Activated CD4-positive, alpha-beta T cell treated with anti-CD3 and anti-CD28 coated beads for 36 hours (primary cell): ENCODE measurements at regions of chr3 and their contacts with region 1.

Region 1: GRCh38 chr3:58217209-58217811 is 6.5 kb upstream of the DNASE1L3 start:
- DNase-seq: peak; percentile 76
- ATAC-seq: peak; percentile 34
- H3K4me3 Mint-ChIP-seq: peak overlapping the region; percentile 9
- H3K27ac Mint-ChIP-seq: no peak overlapping the region
- H3K4me1 Mint-ChIP-seq: peaks cover 36% of the 10 kb centered on the region
- H3K27me3 Mint-ChIP-seq: peaks cover 4% of the 10 kb centered on the region

Region 2: GRCh38 chr3:57903124-57903890 is 314.0 kb before region 1 on chr3:
- CTCF ChIA-PET with region 1: no interaction called
- POLR2A ChIA-PET with region 1: no interaction called
- intact Hi-C with region 1: no loop called
- DNase-seq: no peak
- ATAC-seq: no peak
- H3K4me3 Mint-ChIP-seq: no peak overlapping the region
- H3K27ac Mint-ChIP-seq: no peak overlapping the region
- H3K4me1 Mint-ChIP-seq: no peaks in the 10 kb centered on the region
- H3K27me3 Mint-ChIP-seq: no peaks in the 10 kb centered on the region

Region 3: DNA sequence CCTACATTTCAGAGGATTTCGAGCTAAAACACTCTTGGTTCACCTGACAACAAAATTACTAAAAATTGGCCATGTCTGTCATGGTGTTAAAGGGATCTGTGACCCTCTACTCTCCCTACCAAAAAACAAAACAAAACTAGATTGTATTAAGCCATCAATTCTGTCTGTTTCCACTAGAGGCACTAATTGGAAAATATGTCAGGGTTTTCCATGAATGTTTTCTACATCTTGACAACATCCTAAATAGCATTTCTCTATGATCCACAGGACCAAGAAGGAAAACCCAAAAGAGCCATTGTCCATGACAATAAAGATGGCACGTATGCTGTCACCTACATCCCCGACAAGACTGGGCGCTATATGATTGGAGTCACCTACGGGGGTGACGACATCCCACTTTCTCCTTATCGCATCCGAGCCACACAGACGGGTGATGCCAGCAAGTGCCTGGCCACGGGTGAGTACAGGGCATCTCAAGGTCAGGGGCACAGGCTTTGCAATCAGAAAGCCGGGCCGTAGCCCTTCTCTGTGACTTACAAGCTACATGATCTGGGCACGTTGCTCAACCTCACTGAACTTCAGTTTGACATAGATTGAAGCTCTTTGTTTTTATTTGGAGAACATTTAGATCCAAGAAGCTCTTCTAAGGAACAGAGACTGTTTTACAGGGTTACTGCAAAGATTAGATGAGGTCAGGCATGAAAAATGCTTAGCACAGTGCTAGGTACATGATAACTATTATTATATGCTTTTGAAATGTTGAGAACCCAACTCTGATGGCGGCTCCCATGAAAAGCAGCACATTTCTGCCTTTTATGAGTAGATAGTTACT is 81.4 kb before region 1 on chr3:
- CTCF ChIA-PET with region 1: no interaction called
- POLR2A ChIA-PET with region 1: no interaction called
- intact Hi-C with region 1: no loop called
- DNase-seq: no peak
- ATAC-seq: no peak
- H3K4me3 Mint-ChIP-seq: no peak overlapping the region
- H3K27ac Mint-ChIP-seq: no peak overlapping the region
- H3K4me1 Mint-ChIP-seq: no peaks in the 10 kb centered on the region
- H3K27me3 Mint-ChIP-seq: no peaks in the 10 kb centered on the region

Region 4: GRCh38 chr3:58188173-58188564 is 29.1 kb before region 1 on chr3:
- CTCF ChIA-PET with region 1: interaction called, 224 read pairs
- POLR2A ChIA-PET with region 1: interaction called, 3 read pairs
- intact Hi-C with region 1: loop called (anchors 1 kb)
- DNase-seq: no peak
- ATAC-seq: peak; percentile 63
- H3K4me3 Mint-ChIP-seq: no peak overlapping the region
- H3K27ac Mint-ChIP-seq: no peak overlapping the region
- H3K4me1 Mint-ChIP-seq: no peaks in the 10 kb centered on the region
- H3K27me3 Mint-ChIP-seq: no peaks in the 10 kb centered on the region

Region 5: GRCh38 chr3:58206406-58207011 is 10.8 kb before region 1 on chr3:
- CTCF ChIA-PET with region 1: interaction called, 13 read pairs
- POLR2A ChIA-PET with region 1: no interaction called
- intact Hi-C with region 1: loop called (anchors 1 kb)
- DNase-seq: peak; percentile 73
- ATAC-seq: peak; percentile 98
- H3K4me3 Mint-ChIP-seq: no peak overlapping the region
- H3K27ac Mint-ChIP-seq: peak overlapping the region; percentile 47
- H3K4me1 Mint-ChIP-seq: peaks cover 12% of the 10 kb centered on the region
- H3K27me3 Mint-ChIP-seq: peaks cover 13% of the 10 kb centered on the region

Region 6: GRCh38 chr3:58231666-58232065 is 14.4 kb after region 1 on chr3:
- CTCF ChIA-PET with region 1: interaction called, 13 read pairs
- POLR2A ChIA-PET with region 1: interaction called, 3 read pairs
- intact Hi-C with region 1: no loop called
- DNase-seq: no peak
- ATAC-seq: no peak
- H3K4me3 Mint-ChIP-seq: no peak overlapping the region
- H3K27ac Mint-ChIP-seq: no peak overlapping the region
- H3K4me1 Mint-ChIP-seq: no peaks in the 10 kb centered on the region
- H3K27me3 Mint-ChIP-seq: peaks cover 18% of the 10 kb centered on the region

Region 7: DNA sequence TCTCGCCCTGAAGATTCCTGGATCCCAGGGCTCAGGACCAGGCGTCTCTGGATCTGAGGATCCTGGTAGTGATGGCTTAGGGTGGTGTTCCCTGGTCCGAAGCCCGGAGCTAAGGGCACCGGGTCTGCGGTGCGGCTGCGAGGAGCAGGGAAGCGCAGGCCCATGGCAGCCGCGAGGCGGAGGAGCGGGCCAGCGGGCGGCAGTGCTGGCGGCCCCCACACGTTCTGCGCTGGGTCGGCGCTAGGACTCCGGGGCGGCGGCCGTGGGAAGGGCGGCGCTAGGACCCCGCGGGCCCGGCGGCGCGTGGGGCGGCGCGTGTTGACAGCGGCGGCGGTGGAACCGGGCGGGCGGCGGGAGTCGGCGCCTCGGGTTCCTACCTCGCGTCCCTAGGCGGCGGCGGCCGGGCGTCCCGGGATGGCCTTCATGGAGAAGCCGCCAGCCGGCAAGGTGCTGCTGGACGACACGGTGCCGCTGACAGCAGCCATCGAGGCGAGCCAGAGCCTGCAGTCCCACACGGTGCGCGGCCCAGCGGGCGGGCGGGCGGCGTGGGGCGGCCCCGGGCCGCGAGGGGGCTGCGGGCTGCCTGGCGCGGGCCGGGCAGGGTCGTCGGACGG is 115.4 kb after region 1 on chr3 and contains the start of gene PXK:
- CTCF ChIA-PET with region 1: no interaction called
- POLR2A ChIA-PET with region 1: no interaction called
- intact Hi-C with region 1: loop called in 1 of 2 experiments (anchors 1 kb)
- DNase-seq: peak; percentile 89
- ATAC-seq: peak; percentile 84
- H3K4me3 Mint-ChIP-seq: peak within 1 kb of the TSS; percentile 100
- H3K27ac Mint-ChIP-seq: peak within 1 kb of the TSS; percentile 96
- H3K4me1 Mint-ChIP-seq: peaks cover 30% of the 10 kb centered on the region
- H3K27me3 Mint-ChIP-seq: no peaks in the 10 kb centered on the region
- total RNA-seq, gene PXK: 35.2 to 50.7 TPM

Region 8: GRCh38 chr3:58742239-58742638 is 524.9 kb after region 1 on chr3:
- CTCF ChIA-PET with region 1: no interaction called
- POLR2A ChIA-PET with region 1: no interaction called
- intact Hi-C with region 1: no loop called
- DNase-seq: no peak
- ATAC-seq: no peak
- H3K4me3 Mint-ChIP-seq: no peak overlapping the region
- H3K27ac Mint-ChIP-seq: no peak overlapping the region
- H3K4me1 Mint-ChIP-seq: no peaks in the 10 kb centered on the region
- H3K27me3 Mint-ChIP-seq: peaks cover 16% of the 10 kb centered on the region